MCF 10A (cell line): ENCODE measurements at regions of chr20 and their contacts with region 1.

Region 1: GRCh38 chr20:59455402-59456341 is 148.7 kb upstream of the PHACTR3 start:
- DNase-seq: peak; percentile 34
- H3K4me3 Mint-ChIP-seq: no peak overlapping the region
- H3K27ac Mint-ChIP-seq: no peak overlapping the region
- H3K4me1 Mint-ChIP-seq: no peaks in the 10 kb centered on the region
- H3K27me3 Mint-ChIP-seq: peaks cover 61% of the 10 kb centered on the region
- CTCF ChIP-seq: peak; percentile 55

Region 2: DNA sequence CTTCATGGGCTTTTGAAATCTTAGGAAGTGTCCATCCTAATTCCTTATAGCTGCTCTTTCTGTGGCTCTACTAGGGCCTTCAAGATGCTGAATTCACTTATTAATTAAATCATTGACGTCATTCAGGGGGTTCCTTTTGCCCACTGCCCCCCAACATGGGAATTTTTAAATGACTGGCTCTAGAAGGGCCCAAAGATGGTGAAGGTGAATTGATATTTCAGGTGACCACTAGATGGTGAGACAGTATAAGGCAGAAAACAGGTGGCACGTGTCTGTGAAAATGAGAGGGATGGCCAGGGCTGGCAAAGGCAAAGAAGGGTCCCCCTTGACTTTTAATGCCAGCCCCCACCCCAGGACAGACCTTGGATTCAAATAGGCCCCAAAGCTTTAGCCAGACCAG is 591.3 kb before region 1 on chr20:
- CTCF ChIA-PET with region 1: interaction called, 50 read pairs
- POLR2A ChIA-PET with region 1: no interaction called
- intact Hi-C with region 1: no loop called
- DNase-seq: peak; percentile 21
- H3K4me3 Mint-ChIP-seq: no peak overlapping the region
- H3K27ac Mint-ChIP-seq: no peak overlapping the region
- H3K4me1 Mint-ChIP-seq: no peaks in the 10 kb centered on the region
- H3K27me3 Mint-ChIP-seq: peaks cover 68% of the 10 kb centered on the region
- CTCF ChIP-seq: peak; percentile 9

Region 3: DNA sequence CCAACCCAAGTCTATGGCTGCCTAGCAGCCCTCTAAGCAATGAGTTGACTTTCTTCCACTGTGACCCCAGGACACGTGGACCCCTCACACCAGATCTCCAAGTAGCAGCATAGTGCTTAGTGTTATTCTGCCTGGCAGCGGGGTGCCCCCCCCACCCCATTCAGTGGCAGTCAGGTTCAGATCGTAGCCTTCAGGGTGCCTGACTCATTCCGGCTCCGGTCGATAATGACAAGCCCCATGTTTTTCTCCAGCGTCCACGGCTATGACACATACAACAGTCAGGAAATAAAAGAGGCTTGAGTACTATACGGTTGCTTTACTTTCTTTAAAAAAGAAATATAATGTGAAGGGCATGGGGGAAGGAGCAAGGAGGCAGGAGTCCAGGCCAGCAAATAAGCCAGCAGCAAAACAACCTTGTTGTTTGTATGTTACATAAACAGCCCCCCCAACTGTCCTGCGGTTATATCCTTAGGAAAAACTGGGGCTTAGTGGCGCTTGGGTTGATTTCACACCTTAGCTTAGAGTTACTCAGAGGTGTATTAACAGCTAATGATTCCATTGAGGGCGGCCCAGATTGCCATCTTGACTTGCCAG is 580.0 kb before region 1 on chr20:
- CTCF ChIA-PET with region 1: interaction called, 36 read pairs
- POLR2A ChIA-PET with region 1: no interaction called
- intact Hi-C with region 1: no loop called
- DNase-seq: peak; percentile 60
- H3K4me3 Mint-ChIP-seq: no peak overlapping the region
- H3K27ac Mint-ChIP-seq: no peak overlapping the region
- H3K4me1 Mint-ChIP-seq: peaks cover 5% of the 10 kb centered on the region
- H3K27me3 Mint-ChIP-seq: peaks cover 13% of the 10 kb centered on the region
- CTCF ChIP-seq: no peak

Region 4: DNA sequence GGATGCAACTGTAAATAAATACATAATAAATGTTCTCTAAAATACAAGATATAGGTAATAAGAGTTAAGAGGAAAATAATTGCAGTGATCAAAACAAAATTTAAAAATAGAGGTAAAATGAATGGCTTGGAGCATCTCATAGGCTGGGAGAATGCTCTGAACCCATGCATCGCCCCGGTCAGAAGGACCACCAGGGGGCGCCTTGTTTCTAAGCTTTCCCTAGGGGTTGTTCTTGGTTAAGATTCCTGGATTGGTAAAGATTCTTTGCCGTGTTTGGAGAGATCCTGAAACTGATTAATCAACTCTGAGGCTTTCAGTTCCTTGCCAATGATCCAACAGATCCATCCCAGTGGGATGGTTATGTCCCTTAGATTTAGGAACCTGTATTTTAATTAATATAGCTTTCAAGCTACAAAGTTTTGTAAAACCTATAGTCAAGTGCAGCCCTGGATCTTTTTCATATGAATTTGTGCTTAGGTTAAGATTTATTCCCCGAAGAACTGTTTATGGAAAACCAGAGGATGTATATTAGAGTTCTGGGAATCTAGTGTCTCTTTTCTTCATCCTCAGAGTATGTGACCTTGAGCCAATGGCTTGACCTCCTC is 367.7 kb before region 1 on chr20:
- CTCF ChIA-PET with region 1: interaction called, 24 read pairs
- POLR2A ChIA-PET with region 1: no interaction called
- intact Hi-C with region 1: loop called (anchors 5 kb)
- DNase-seq: peak; percentile 77
- H3K4me3 Mint-ChIP-seq: no peak overlapping the region
- H3K27ac Mint-ChIP-seq: no peak overlapping the region
- H3K4me1 Mint-ChIP-seq: peaks cover 16% of the 10 kb centered on the region
- H3K27me3 Mint-ChIP-seq: peaks cover 51% of the 10 kb centered on the region
- CTCF ChIP-seq: peak; percentile 81

Region 5: DNA sequence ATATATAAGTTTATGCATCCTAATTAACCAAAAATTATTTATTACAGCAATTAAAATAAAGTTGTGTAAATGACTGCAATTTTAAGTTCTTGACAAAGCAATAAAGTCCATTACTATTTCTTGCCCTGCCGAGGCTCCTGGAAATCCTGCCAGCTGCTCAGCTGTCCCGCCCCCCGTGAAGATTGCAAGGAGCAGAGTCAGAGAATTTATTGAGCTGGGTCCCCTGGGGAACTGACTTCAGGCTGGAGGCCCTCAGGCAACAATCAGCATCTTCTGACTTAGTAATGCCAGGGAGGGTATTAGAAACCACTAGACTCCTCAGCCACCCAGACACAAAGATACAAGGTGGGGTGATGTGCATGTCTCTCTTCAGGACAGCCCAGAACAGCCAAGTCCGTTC is 62.9 kb before region 1 on chr20:
- CTCF ChIA-PET with region 1: no interaction called
- POLR2A ChIA-PET with region 1: no interaction called
- intact Hi-C with region 1: no loop called
- DNase-seq: no peak
- H3K4me3 Mint-ChIP-seq: no peak overlapping the region
- H3K27ac Mint-ChIP-seq: no peak overlapping the region
- H3K4me1 Mint-ChIP-seq: no peaks in the 10 kb centered on the region
- H3K27me3 Mint-ChIP-seq: peaks cover 32% of the 10 kb centered on the region
- CTCF ChIP-seq: no peak

Region 6: GRCh38 chr20:59439243-59439642 is 16.4 kb before region 1 on chr20:
- CTCF ChIA-PET with region 1: interaction called, 36 read pairs
- POLR2A ChIA-PET with region 1: interaction called, 3 read pairs
- intact Hi-C with region 1: no loop called
- DNase-seq: peak; percentile 5
- H3K4me3 Mint-ChIP-seq: no peak overlapping the region
- H3K27ac Mint-ChIP-seq: no peak overlapping the region
- H3K4me1 Mint-ChIP-seq: no peaks in the 10 kb centered on the region
- H3K27me3 Mint-ChIP-seq: peaks cover 52% of the 10 kb centered on the region
- CTCF ChIP-seq: no peak